Activated naive CD4-positive, alpha-beta T cell treated with anti-CD3 and anti-CD28 coated beads, Interleukin-2, amount 10 ng/mL, durations not matched to agents 7 days and 5 days (primary cell): ENCODE measurements at regions of chr21 and their contacts with region 1.

Region 1: DNA sequence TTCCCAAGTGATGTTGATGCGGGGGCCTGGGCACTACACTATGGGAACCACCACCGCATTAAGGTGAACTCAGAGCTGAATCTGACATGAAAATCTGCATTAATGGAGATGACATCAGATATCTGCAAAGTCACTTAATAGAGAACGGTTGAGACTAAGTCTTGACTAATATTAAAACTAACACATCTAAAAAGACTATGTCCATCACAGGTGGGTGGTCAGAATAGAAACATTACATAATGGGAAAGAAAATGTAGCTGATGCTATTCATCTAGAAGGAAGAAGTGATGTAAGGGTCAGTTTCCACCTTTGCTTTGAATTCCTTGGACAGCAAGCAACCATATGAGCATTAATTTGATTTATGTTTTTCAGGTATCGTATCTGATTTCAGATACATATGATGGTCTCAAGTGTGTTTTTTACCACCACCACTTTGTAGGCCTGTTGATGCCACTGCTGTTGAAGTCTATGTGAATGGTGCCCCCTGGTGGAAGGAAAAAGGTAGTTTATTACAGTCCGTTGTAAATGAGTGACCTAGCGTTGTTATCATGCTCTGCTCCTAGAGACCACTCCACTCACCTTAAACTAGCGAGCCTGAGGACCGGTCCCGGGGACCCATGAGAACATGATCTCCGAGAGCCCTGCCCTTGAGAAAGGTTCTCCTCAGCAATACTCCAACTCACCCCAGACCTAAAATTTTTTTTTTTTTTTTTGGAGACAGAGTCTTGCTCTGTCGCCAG is 73.5 kb downstream of the BACH1 start:
- DNase-seq: peak; percentile 57
- H3K4me3 Mint-ChIP-seq: no peak overlapping the region
- H3K27ac Mint-ChIP-seq: no peak overlapping the region
- H3K4me1 Mint-ChIP-seq: peaks cover 9% of the 10 kb centered on the region
- H3K27me3 Mint-ChIP-seq: no peaks in the 10 kb centered on the region

Region 2: DNA sequence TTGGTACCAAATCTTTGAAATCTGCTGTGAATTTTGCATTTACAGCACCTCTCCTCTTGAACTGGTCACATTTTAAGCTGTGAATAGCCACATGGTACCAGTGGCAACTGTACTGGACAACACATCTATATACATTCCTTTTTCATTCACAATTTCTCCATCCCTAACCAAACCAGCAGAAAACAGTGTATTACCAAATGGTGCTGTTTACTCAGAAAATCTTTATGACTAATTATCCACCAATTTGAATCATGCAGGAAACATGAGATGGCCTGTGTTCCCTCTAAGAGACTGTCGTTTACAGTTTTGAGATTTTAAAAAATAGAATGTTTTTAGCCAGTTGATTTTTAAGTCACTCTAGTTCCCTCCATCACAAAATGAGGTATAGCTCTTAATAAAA is 281.2 kb before region 1 on chr21:
- CTCF ChIA-PET with region 1: interaction called, 20 read pairs
- DNase-seq: no peak
- H3K4me3 Mint-ChIP-seq: no peak overlapping the region
- H3K27ac Mint-ChIP-seq: no peak overlapping the region
- H3K4me1 Mint-ChIP-seq: no peaks in the 10 kb centered on the region
- H3K27me3 Mint-ChIP-seq: no peaks in the 10 kb centered on the region

Region 3: GRCh38 chr21:29164325-29164942 is 207.8 kb before region 1 on chr21:
- CTCF ChIA-PET with region 1: interaction called, 12 read pairs
- DNase-seq: no peak
- H3K4me3 Mint-ChIP-seq: no peak overlapping the region
- H3K27ac Mint-ChIP-seq: no peak overlapping the region
- H3K4me1 Mint-ChIP-seq: peaks cover 5% of the 10 kb centered on the region
- H3K27me3 Mint-ChIP-seq: no peaks in the 10 kb centered on the region

Region 4: GRCh38 chr21:29360799-29361765 is 11.2 kb before region 1 on chr21:
- CTCF ChIA-PET with region 1: interaction called, 16 read pairs
- DNase-seq: no peak
- H3K4me3 Mint-ChIP-seq: no peak overlapping the region
- H3K27ac Mint-ChIP-seq: no peak overlapping the region
- H3K4me1 Mint-ChIP-seq: peaks cover 8% of the 10 kb centered on the region
- H3K27me3 Mint-ChIP-seq: no peaks in the 10 kb centered on the region